Mucosa of descending colon (tissue), 3 donors: ENCODE measurements at regions of chr15 and their contacts with region 1.

Region 1: DNA sequence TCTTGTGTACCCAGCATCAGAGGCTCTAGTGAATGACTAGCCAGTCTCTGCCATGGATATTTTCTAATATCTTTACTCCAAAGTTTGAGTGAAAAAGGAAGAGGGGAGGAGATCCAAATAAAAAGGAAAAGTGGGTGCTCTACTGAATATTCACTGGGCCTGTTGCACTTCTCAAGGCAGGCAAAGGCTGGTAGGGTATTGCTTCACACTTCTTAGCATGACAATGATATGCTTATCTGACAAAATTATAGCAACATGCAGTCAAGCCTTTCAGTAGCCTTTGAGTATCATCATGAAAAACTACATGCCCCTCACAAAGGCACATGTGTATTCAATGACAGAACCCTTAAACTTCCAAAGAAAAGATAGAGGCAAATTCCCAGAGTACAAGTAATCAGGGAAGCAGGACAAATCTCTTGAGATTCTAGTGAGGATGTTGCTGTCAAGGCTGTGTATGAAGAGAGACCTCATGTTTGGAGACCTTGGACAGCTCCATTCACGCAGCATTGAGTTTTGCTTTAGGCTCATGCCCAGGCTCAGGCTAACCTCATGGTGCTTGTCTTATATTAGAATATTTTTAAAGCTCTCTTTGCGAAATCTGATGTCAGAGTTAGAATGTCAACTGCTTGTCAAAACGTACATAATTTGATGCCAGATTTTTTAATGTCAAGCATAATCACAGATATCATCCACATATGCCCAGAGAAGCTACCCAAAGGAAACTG is 506.9 kb downstream of the OCA2 start:
- DNase-seq: no peak
- ATAC-seq: no peak
- H3K4me3 ChIP-seq: no peak overlapping the region
- H3K4me1 ChIP-seq: no peaks in the 10 kb centered on the region
- CTCF ChIP-seq: no peak

Region 2: GRCh38 chr15:27491666-27492621 is 100.3 kb before region 1 on chr15:
- intact Hi-C with region 1: no loop called
- DNase-seq: no peak
- ATAC-seq: no peak
- H3K4me3 ChIP-seq: no peak overlapping the region
- H3K4me1 ChIP-seq: no peaks in the 10 kb centered on the region
- CTCF ChIP-seq: no peak

Region 3: GRCh38 chr15:27514526-27514925 is 77.7 kb before region 1 on chr15:
- intact Hi-C with region 1: no loop called
- DNase-seq: no peak
- ATAC-seq: no peak
- H3K4me3 ChIP-seq: no peak overlapping the region
- H3K4me1 ChIP-seq: no peaks in the 10 kb centered on the region
- CTCF ChIP-seq: no peak

Region 4: GRCh38 chr15:27538325-27538724 is 53.9 kb before region 1 on chr15:
- intact Hi-C with region 1: loop called in 1 of 2 experiments (anchors 10 kb)
- DNase-seq: no peak
- ATAC-seq: no peak
- H3K4me3 ChIP-seq: no peak overlapping the region
- H3K4me1 ChIP-seq: no peaks in the 10 kb centered on the region
- CTCF ChIP-seq: no peak